ENCODE measurements at regions of chrX and their contacts with region 1.

Region 1: GRCh38 chrX:13506574-13506973 is 62.8 kb upstream of the EGFL6 start:
- DNase-seq: no peak
- H3K4me3 ChIP-seq: no peak overlapping the region
- H3K27ac ChIP-seq: no peak overlapping the region
- H3K4me1 ChIP-seq: no peaks in the 10 kb centered on the region
- H3K27me3 ChIP-seq: no peaks in the 10 kb centered on the region
- CTCF ChIP-seq: peak; percentile 70 to 83 (median 71)
- EP300 ChIP-seq: no peak
- POLR2A ChIP-seq: no peak

Region 2: GRCh38 chrX:13194291-13195103 is 312.1 kb before region 1 on chrX:
- intact Hi-C with region 1: no loop called
- DNase-seq: no peak
- H3K4me3 ChIP-seq: no peak overlapping the region
- H3K27ac ChIP-seq: no peak overlapping the region
- H3K4me1 ChIP-seq: peaks cover 0 to 4% (median 0%) of the 10 kb centered on the region in 4 donors
- H3K27me3 ChIP-seq: no peaks in the 10 kb centered on the region
- CTCF ChIP-seq: no peak
- EP300 ChIP-seq: no peak
- POLR2A ChIP-seq: no peak

Region 3: DNA sequence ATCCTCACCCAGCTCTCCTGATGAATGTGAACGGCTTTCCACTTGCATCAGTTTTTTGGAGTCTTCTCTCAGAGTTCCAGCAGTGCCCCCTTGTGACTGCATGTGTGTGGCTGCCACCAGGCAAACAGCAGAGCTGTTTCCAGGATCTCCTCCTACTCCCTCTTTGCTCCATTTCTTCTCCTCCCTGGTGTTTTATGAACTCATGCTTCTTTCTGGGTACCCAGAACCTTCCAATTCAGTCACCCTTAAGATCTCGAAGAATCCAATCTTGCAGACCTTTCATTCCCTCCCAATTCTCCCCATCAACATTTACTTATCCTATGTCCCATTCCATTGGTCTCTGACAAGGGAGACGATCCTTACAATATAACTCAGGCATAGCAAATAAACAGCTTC is 139.6 kb after region 1 on chrX:
- intact Hi-C with region 1: loop called (anchors 2 kb)
- DNase-seq: no peak
- H3K4me3 ChIP-seq: no peak overlapping the region
- H3K27ac ChIP-seq: no peak overlapping the region
- H3K4me1 ChIP-seq: peaks cover 0 to 20% (median 0%) of the 10 kb centered on the region in 4 donors
- H3K27me3 ChIP-seq: no peaks in the 10 kb centered on the region
- CTCF ChIP-seq: peak; percentile 47 to 64 (median 51)
- EP300 ChIP-seq: no peak
- POLR2A ChIP-seq: no peak

Region 4: DNA sequence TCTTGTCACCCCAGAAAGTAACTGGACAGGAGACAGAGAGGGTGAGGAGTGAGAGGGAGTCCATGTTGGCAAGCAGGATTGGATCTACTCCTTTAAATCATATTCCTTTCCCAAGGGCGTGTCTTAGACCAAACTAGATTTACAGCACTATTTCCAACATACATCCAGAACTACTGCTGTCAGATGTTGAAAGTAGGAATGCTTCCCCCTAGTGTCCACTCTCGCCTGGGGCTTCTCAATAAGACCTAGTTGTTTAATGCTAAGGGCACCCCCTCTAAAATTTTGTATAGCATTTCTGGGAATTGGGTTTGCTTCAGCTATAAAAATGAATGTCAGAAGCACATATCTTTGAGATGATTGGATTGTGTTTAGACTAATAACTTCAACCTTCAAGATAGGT is 241.3 kb after region 1 on chrX:
- intact Hi-C with region 1: loop called (anchors 5 kb)
- DNase-seq: no peak
- H3K4me3 ChIP-seq: no peak overlapping the region
- H3K27ac ChIP-seq: no peak overlapping the region
- H3K4me1 ChIP-seq: peaks cover 0 to 8% (median under 1%) of the 10 kb centered on the region in 4 donors
- H3K27me3 ChIP-seq: no peaks in the 10 kb centered on the region
- CTCF ChIP-seq: peak; percentile 12 to 52 (median 24)
- EP300 ChIP-seq: no peak
- POLR2A ChIP-seq: no peak

Region 5: DNA sequence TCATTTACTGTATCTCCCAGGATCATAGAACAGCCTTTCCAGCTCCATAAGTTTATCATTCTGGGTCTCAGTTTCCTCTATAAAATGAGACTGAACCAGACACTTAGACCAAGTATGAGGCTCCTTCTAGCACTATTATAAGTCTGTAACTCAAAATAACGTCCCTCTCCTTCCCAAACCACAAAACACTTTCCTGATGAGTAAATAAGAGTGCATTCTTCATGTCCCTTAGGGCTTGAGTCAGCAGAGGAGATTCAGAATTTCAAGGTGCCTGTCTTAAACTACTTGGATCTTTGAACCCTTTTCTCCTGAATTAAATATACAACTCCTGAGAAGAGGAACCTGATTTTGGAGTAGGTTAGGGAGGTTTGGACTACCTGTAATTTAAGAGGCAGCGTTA is 1085.4 kb after region 1 on chrX:
- intact Hi-C with region 1: no loop called
- DNase-seq: no peak
- H3K4me3 ChIP-seq: no peak overlapping the region
- H3K27ac ChIP-seq: no peak overlapping the region
- H3K4me1 ChIP-seq: no peaks in the 10 kb centered on the region
- H3K27me3 ChIP-seq: no peaks in the 10 kb centered on the region
- CTCF ChIP-seq: no peak
- EP300 ChIP-seq: no peak
- POLR2A ChIP-seq: no peak

Measured in esophagus muscularis mucosa (tissue), 4 donors.